Sigmoid colon (tissue), 7 donors: ENCODE measurements at regions of chr9 and their contacts with region 1.

Region 1: DNA sequence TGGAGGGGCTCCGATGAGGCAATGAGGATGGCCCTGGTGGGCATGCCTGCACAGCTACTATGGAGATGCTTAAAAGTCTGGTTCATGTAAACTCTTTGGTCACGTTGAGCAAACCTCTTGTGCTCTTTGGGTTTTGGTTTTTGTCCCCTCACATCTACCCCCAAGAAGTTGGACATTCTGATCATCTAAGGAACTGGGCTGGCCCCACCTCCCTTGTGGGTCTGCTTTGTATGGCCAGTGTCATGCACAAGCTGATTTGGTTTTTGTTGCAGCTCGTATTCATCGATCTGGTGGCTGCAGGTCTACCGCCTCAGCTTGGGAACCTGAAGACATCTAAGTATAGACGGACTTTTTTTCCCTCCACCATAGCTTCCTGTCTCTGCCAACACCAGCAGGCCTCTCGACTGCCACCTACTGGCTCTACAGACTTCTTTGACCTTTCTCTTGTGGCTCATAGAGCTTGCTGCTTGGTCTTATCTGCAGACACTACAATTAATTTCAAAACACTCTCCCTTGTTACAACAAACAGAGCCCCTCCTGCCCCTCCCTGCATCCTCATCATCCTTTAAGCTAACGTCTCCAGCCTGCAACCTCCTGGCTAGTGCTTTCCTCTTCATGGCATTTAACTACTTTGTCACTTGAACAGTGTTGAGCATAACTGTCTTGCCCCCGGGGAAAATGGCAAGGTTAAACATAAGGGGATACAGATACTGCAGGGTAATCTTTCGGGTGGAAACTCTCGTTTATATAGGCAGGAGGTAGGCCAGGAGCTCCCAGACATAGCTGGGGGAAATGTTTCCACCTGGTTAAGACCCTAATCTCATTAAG is 34.5 kb downstream of the TSTD2 start:
- DNase-seq: peak; percentile 89
- H3K4me3 ChIP-seq: no peak overlapping the region
- H3K27ac ChIP-seq: peak overlapping the region in 3 of 4 donors; percentile 18 to 64 (median 61)
- H3K4me1 ChIP-seq: peaks cover 0 to 49% (median 32%) of the 10 kb centered on the region in 4 donors
- H3K27me3 ChIP-seq: no peaks in the 10 kb centered on the region
- CTCF ChIP-seq: peak; percentile 74 to 82 (median 81)
- EP300 ChIP-seq: no peak
- POLR2A ChIP-seq: no peak

Region 2: GRCh38 chr9:97468658-97469448 is 129.8 kb before region 1 on chr9:
- intact Hi-C with region 1: loop called (anchors 1 kb)
- DNase-seq: peak; percentile 92
- H3K4me3 ChIP-seq: no peak overlapping the region
- H3K27ac ChIP-seq: peak overlapping the region; percentile 66 to 82 (median 79)
- H3K4me1 ChIP-seq: peaks cover 0 to 15% (median 14%) of the 10 kb centered on the region in 4 donors
- H3K27me3 ChIP-seq: no peaks in the 10 kb centered on the region
- CTCF ChIP-seq: peak; percentile 79 to 91 (median 85)
- EP300 ChIP-seq: no peak
- POLR2A ChIP-seq: no peak

Region 3: GRCh38 chr9:97518909-97519307 is 79.8 kb before region 1 on chr9:
- intact Hi-C with region 1: loop called (anchors 5 kb)
- DNase-seq: peak; percentile 95
- H3K4me3 ChIP-seq: peak overlapping the region in 3 of 4 donors; percentile 0 to 19 (median 11)
- H3K27ac ChIP-seq: peak overlapping the region; percentile 82 to 90 (median 86)
- H3K4me1 ChIP-seq: peaks cover 0 to 80% (median 72%) of the 10 kb centered on the region in 4 donors
- H3K27me3 ChIP-seq: no peaks in the 10 kb centered on the region
- CTCF ChIP-seq: no peak
- EP300 ChIP-seq: peak; percentile 42 to 94 (median 53)
- POLR2A ChIP-seq: no peak

Region 4: DNA sequence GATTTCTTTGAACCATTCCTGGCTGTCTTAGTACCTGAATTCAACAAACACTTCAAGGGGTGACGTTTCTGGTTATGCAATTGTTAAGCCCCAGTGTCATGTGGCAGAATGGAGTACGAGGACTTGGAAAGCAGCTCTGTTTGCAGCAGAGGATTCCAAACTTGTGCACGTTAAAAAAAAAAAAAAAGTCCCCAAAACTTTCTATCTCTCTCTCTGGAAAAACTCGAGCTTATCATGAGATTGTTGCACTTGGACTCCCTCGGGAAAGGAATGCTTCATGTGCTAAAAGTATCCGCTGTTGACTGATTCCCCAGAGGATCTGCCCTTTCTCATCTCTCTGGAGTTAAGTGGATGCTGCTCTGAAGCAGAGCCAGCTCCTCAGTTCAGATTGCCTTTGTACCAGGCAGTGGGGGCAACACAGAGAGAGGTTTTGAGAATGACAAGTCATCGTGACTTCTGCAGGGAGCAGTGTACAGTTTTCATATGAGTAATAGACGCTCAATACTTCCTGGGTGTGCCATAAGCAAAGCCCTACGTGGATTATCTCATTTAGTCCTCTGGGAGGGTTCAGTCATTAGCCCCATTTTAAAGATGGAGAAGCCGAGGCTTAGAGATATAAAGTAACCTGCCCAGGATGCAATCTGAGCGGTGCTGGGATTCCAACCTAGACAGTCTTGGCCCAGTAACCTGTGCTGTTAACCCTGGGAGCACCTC is 69.2 kb before region 1 on chr9:
- intact Hi-C with region 1: loop called (anchors 5 kb)
- DNase-seq: peak; percentile 85
- H3K4me3 ChIP-seq: no peak overlapping the region
- H3K27ac ChIP-seq: peak overlapping the region; percentile 77 to 92 (median 86)
- H3K4me1 ChIP-seq: peaks cover 0 to 66% (median 59%) of the 10 kb centered on the region in 4 donors
- H3K27me3 ChIP-seq: no peaks in the 10 kb centered on the region
- CTCF ChIP-seq: no peak
- EP300 ChIP-seq: peak; percentile 41 to 94 (median 68)
- POLR2A ChIP-seq: no peak

Region 5: DNA sequence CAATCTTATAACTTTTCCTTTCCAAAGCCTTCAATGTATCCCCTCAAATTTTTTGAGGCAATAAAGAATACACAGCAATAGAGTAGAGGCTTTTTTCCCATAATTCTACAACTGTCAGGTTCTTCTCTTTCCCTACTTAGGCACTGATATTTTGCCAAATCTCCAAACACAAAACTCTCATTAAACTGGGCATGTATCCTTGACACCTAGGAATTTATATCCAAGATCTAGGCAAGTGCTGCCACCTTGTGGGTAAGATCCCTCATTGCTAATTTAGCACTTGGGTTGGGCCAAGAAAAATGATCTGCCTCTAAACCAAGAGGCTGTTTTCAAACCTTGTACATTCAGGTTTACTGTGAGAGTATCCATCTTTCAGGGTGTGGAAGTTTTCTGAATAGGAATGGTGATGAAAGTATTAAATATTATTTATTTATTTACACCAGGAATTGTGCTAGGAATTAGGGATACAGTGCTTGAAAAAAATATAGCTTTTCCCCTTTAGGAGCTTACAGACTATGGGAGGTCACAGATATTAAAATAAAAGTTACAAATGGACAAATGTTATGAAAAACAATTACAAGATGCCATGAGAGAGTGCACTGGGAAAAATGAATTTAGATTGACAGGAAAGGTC is 16.9 kb after region 1 on chr9:
- intact Hi-C with region 1: loop called (anchors 2 kb)
- DNase-seq: peak; percentile 81
- H3K4me3 ChIP-seq: no peak overlapping the region
- H3K27ac ChIP-seq: peak overlapping the region in 1 of 4 donors; percentile 13
- H3K4me1 ChIP-seq: peaks cover 0 to 11% (median 4%) of the 10 kb centered on the region in 4 donors
- H3K27me3 ChIP-seq: no peaks in the 10 kb centered on the region
- CTCF ChIP-seq: peak; percentile 69 to 84 (median 78)
- EP300 ChIP-seq: no peak
- POLR2A ChIP-seq: no peak